Endothelial cell of umbilical vein (primary cell): ENCODE measurements at regions of chr13 and their contacts with region 1.

Region 1: GRCh38 chr13:33494596-33495204 is 209.1 kb upstream of the STARD13 start:
- DNase-seq: peak; percentile 99
- H3K4me3 ChIP-seq: peak overlapping the region in 1 of 3 experiments; percentile 26
- H3K27ac ChIP-seq: peak overlapping the region; percentile 98
- H3K4me1 ChIP-seq: peaks cover 66% of the 10 kb centered on the region
- H3K27me3 ChIP-seq: no peaks in the 10 kb centered on the region
- CTCF ChIP-seq: no peak
- POLR2A ChIP-seq: peak; percentile 71

Region 2: DNA sequence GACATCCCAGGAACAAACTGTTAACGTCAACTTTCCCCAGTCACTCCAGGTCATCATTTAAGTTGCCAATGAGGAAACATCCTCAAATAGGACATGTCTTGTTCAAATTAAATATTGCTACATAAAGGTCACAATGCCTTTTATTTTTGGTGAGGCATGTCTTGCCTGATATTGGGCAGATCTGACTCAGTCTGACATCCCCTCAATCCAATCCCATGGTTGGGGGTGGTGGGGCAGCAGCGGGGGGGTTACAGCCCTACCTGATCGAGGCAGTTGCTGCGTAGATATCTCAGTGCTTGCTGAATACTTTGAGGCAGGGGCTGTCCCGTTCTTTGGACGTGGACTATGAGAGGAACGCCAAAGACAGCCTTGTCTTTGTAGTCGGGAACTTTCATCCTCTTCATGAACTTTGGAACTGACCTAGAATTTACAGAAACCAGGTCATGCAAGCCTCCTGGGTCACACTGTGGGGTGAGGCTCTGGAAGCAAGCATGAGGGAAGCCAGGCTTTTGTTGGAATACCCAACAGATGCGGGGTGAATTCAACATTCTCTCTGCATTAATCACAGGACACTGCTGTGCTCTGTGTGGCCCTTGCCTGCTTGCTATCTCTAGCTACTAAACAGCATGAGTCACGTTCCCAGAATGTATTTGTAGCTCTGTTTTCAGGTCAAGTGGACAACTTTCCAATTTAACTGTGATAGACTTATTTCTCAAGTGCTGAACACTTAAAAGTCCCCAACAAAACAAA is 368.7 kb before region 1 on chr13:
- CTCF ChIA-PET with region 1: no interaction called
- POLR2A ChIA-PET with region 1: no interaction called
- dilution Hi-C with region 1: no loop called
- intact Hi-C with region 1: loop called (anchors 1 kb)
- DNase-seq: peak; percentile 94
- H3K4me3 ChIP-seq: no peak overlapping the region
- H3K27ac ChIP-seq: peak overlapping the region; percentile 93
- H3K4me1 ChIP-seq: peaks cover 51% of the 10 kb centered on the region
- H3K27me3 ChIP-seq: no peaks in the 10 kb centered on the region
- CTCF ChIP-seq: no peak
- POLR2A ChIP-seq: peak; percentile 48

Region 3: GRCh38 chr13:33194820-33195692 is 299.6 kb before region 1 on chr13:
- CTCF ChIA-PET with region 1: no interaction called
- POLR2A ChIA-PET with region 1: no interaction called
- dilution Hi-C with region 1: no loop called
- intact Hi-C with region 1: loop called (anchors 2 kb)
- DNase-seq: peak; percentile 86
- H3K4me3 ChIP-seq: no peak overlapping the region
- H3K27ac ChIP-seq: peak overlapping the region; percentile 87
- H3K4me1 ChIP-seq: peaks cover 39% of the 10 kb centered on the region
- H3K27me3 ChIP-seq: no peaks in the 10 kb centered on the region
- CTCF ChIP-seq: no peak
- POLR2A ChIP-seq: no peak

Region 4: GRCh38 chr13:33251131-33251661 is 243.5 kb before region 1 on chr13:
- CTCF ChIA-PET with region 1: no interaction called
- POLR2A ChIA-PET with region 1: interaction called, 4 read pairs
- dilution Hi-C with region 1: no loop called
- intact Hi-C with region 1: loop called (anchors 1 kb)
- DNase-seq: peak; percentile 87
- H3K4me3 ChIP-seq: peak overlapping the region in 1 of 3 experiments; percentile 3
- H3K27ac ChIP-seq: peak overlapping the region; percentile 85
- H3K4me1 ChIP-seq: peaks cover 44% of the 10 kb centered on the region
- H3K27me3 ChIP-seq: no peaks in the 10 kb centered on the region
- CTCF ChIP-seq: no peak
- POLR2A ChIP-seq: no peak

Region 5: GRCh38 chr13:33509642-33510229 is 15.0 kb after region 1 on chr13:
- CTCF ChIA-PET with region 1: interaction called, 10 read pairs
- POLR2A ChIA-PET with region 1: interaction called, 3 read pairs
- dilution Hi-C with region 1: no loop called
- intact Hi-C with region 1: loop called (anchors 1 kb)
- DNase-seq: peak; percentile 67
- H3K4me3 ChIP-seq: no peak overlapping the region
- H3K27ac ChIP-seq: peak overlapping the region; percentile 88
- H3K4me1 ChIP-seq: peaks cover 22% of the 10 kb centered on the region
- H3K27me3 ChIP-seq: no peaks in the 10 kb centered on the region
- CTCF ChIP-seq: no peak
- POLR2A ChIP-seq: peak; percentile 36